Left lung (tissue), 14 donors: ENCODE measurements at regions of chrX and their contacts with region 1.

Region 1: DNA sequence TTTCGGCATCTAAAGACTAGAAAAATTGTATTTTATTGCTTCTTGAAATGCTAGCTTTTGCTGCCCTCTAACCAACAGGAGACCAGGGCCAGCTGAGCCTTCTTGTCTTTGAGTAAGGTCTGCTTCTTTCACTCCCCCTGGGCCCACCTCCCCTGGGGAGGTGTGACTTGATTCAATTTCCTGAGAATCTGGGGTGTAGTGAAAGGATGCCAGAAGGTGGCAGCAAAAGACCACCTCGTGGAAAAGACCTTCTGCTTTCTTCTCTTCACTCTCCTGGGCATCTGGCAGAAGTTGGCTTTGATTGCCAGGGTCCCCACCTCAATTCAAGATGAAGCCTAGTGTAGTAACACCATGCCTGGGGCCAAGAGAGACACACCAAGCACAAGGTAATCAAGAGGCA is 96.5 kb upstream of the MAOA start:
- DNase-seq: peak in 3 of 4 donors; percentile 33 to 55 (median 35)
- ATAC-seq: peak; percentile 79
- H3K4me3 ChIP-seq: no peak overlapping the region
- H3K27ac ChIP-seq: no peak overlapping the region
- H3K4me1 ChIP-seq: no peaks in the 10 kb centered on the region
- H3K27me3 ChIP-seq: no peaks in the 10 kb centered on the region
- CTCF ChIP-seq: peak; percentile 20 to 32

Region 2: DNA sequence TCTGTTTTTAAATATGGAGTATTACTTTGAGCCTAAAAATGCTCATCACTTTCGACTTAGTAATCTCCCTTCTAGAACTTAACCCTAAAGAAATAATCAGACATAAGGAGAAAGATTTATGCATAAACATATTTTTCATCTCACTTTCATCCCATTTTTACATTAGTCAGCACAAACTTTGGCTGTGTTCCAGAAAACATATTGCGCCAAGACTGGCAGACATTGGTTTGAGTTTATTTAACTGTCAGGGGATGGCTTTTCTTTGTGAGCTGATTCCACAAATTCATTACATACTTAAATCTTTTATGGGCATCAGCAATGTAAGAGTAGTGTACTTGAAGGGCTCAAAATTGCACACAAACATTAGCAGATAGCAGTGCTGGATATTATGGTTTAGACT is 120.1 kb after region 1 on chrX:
- intact Hi-C with region 1: no loop called
- DNase-seq: no peak
- ATAC-seq: no peak
- H3K4me3 ChIP-seq: no peak overlapping the region
- H3K27ac ChIP-seq: no peak overlapping the region
- H3K4me1 ChIP-seq: peaks cover 7 to 14% of the 10 kb centered on the region in 2 donors
- H3K27me3 ChIP-seq: no peaks in the 10 kb centered on the region
- CTCF ChIP-seq: no peak

Region 3: DNA sequence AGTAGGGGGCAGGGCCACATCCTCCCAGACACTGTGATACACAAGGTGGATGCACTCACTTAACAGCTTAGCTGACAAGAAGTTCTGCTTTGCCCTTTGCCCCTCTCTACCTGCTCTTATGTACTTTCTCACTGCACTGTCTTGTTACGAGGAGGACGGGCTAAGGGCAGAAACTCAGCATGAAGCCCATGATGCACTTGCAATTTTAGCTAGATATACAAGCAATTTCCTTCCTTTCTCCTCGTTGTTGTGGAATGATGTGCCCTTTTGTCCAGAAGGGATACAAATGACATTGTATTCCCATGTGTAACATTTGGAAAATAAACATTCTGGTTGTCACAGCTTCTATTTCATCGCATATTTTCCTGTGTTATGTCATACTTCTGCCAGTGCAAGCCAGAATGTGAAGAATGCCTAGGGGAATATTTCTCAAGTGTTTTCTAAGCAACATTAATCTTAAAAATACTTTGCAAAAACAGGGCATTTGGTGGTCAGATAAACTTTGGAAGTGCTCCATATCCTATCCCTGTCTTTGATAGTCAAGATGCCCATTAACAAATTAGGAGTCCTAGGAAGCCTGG is 143.7 kb after region 1 on chrX:
- intact Hi-C with region 1: no loop called
- DNase-seq: no peak
- ATAC-seq: peak; percentile 56
- H3K4me3 ChIP-seq: no peak overlapping the region
- H3K27ac ChIP-seq: peak overlapping the region; percentile 57 to 70
- H3K4me1 ChIP-seq: peaks cover 8 to 10% of the 10 kb centered on the region in 2 donors
- H3K27me3 ChIP-seq: no peaks in the 10 kb centered on the region
- CTCF ChIP-seq: no peak

Region 4: DNA sequence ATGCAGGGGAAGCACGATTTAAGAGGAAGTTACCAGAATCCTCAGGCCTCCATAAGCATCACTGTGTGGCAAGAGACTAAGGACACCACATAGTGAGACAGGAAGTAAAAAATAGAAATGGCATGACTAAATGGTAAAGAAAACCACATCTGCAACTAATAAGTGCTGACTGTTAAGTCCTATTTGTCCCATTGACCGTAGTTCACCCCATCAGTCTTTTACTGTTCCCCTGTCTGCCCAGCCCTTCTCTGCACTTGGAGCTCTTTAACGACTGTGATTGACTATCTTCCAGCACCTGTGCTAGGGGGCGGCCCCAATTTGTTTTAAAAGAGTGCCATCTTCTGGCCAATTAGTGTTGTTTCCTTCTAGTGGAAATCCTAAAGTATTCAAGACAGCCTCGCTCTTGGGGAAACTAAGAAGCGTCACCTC is 190.6 kb after region 1 on chrX:
- intact Hi-C with region 1: loop called in 1 of 2 experiments (anchors 5 kb)
- DNase-seq: peak in 2 of 4 donors; percentile 38 to 50
- ATAC-seq: peak; percentile 86
- H3K4me3 ChIP-seq: no peak overlapping the region
- H3K27ac ChIP-seq: peak overlapping the region in 1 of 2 donors; percentile 53
- H3K4me1 ChIP-seq: no peaks in the 10 kb centered on the region
- H3K27me3 ChIP-seq: no peaks in the 10 kb centered on the region
- CTCF ChIP-seq: peak; percentile 33 to 43